ENCODE measurements at regions of chr2 and their contacts with region 1.

Region 1: GRCh38 chr2:43097644-43098408 is 128.6 kb downstream of the ZFP36L2 start:
- DNase-seq: no peak
- H3K4me3 ChIP-seq: no peak overlapping the region
- H3K27ac ChIP-seq: no peak overlapping the region
- H3K4me1 ChIP-seq: peaks cover 24% of the 10 kb centered on the region
- H3K27me3 ChIP-seq: no peaks in the 10 kb centered on the region
- CTCF ChIP-seq: no peak

Region 2: DNA sequence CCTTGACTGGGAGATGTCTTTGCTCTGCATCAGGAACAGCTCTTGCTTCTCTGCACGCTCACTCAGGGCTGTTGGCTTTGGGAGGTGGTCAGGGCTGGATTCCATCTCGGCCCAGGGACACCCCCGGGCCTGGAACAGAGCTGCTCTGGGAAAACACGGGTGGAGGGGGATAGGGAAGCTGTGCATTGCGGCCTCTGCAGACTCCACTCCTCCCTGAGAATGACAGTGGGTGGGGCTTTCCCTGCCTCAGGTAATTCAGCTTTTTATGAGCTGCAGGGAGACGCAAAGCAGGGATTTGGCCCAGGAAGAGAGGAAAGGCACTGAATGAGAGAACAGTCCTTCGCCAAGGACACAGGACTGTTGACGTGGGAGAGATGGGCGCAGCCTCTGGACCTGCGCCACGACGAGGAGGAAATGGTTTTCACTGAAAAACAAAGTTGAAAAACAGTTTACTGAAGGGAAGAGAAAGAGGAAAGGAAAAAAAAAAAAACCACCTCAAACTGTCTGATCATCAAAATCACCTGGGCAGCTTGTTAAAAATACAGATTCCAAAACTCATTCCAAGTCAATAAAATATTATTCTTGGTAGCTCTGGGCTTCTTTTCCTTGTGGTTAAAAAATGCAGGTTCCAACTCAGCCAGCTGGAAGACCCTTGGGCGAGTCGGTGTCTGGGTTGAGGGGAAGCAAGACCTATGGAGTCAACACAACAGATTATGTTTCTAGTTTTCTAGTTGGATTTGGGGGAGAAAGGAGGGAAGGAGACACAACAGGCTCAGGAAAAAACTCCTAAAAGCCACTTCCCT is 65.4 kb before region 1 on chr2:
- CTCF ChIA-PET with region 1: no interaction called
- dilution Hi-C with region 1: loop called (anchors 10 kb)
- in situ Hi-C with region 1: no loop called
- intact Hi-C with region 1: no loop called
- DNase-seq: peak; percentile 68
- H3K4me3 ChIP-seq: no peak overlapping the region
- H3K27ac ChIP-seq: peak overlapping the region; percentile 13
- H3K4me1 ChIP-seq: peaks cover 20% of the 10 kb centered on the region
- H3K27me3 ChIP-seq: no peaks in the 10 kb centered on the region
- CTCF ChIP-seq: no peak

Region 3: DNA sequence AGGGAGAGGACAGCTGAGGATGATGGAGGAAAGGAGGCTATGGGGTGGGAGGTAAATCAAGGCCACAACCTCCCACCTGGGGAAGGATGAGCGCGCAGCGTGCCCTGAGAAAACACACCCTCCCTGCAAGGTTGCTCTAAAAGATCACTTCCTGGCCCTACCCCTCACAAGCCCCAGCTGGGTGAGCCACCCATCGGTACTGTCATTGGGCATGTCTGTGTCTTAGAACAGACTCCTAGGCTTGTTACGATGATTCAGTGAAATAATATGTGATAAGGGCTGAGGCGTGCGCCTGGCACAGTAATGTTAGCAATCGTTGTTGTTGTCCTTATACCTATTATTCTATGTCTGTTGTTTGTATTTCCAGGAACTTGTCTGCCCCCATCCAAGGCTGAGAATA is 46.5 kb before region 1 on chr2:
- CTCF ChIA-PET with region 1: no interaction called
- dilution Hi-C with region 1: no loop called
- in situ Hi-C with region 1: no loop called
- intact Hi-C with region 1: no loop called
- DNase-seq: peak; percentile 89
- H3K4me3 ChIP-seq: no peak overlapping the region
- H3K27ac ChIP-seq: peak overlapping the region; percentile 85
- H3K4me1 ChIP-seq: peaks cover 36% of the 10 kb centered on the region
- H3K27me3 ChIP-seq: no peaks in the 10 kb centered on the region
- CTCF ChIP-seq: no peak